Calu3 (cell line): ENCODE measurements at regions of chr4 and their contacts with region 1.

Region 1: GRCh38 chr4:109702950-109703663 is at the start of gene CASP6:
- DNase-seq: peak; percentile 75
- H3K4me3 Mint-ChIP-seq: peak within 1 kb of the TSS; percentile 92
- H3K27ac Mint-ChIP-seq: peak within 1 kb of the TSS; percentile 40
- H3K4me1 Mint-ChIP-seq: peaks cover 16% of the 10 kb centered on the region
- H3K27me3 Mint-ChIP-seq: no peaks in the 10 kb centered on the region
- CTCF ChIP-seq: peak; percentile 54
- total RNA-seq, gene CASP6: 16.1 and 22.3 TPM in 2 replicates

Region 2: GRCh38 chr4:109125084-109125483 is 578.0 kb before region 1 on chr4:
- CTCF ChIA-PET with region 1: no interaction called
- intact Hi-C with region 1: no loop called
- DNase-seq: no peak
- H3K4me3 Mint-ChIP-seq: no peak overlapping the region
- H3K27ac Mint-ChIP-seq: no peak overlapping the region
- H3K4me1 Mint-ChIP-seq: no peaks in the 10 kb centered on the region
- H3K27me3 Mint-ChIP-seq: no peaks in the 10 kb centered on the region
- CTCF ChIP-seq: no peak

Region 3: DNA sequence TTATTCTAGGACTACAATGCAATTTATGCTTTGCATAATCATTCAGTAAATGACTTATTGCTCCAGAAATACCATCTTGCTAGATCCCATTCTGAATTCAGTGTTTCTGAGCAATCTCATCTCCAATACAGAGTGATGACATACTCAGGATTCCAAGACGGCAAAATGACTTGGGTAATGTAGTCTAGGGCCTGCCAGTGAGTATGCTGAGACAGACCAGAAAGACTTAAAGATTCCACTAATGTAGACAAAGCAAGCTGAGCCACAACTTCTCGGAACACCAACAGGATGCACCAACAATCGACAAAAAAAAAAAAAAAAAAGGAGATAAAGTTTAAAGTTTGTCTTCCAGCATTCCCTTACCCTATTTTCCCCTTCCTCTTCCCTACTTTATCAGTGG is 270.4 kb before region 1 on chr4:
- CTCF ChIA-PET with region 1: no interaction called
- intact Hi-C with region 1: loop called (anchors 5 kb)
- DNase-seq: no peak
- H3K4me3 Mint-ChIP-seq: peak overlapping the region; percentile 59
- H3K27ac Mint-ChIP-seq: no peak overlapping the region
- H3K4me1 Mint-ChIP-seq: no peaks in the 10 kb centered on the region
- H3K27me3 Mint-ChIP-seq: no peaks in the 10 kb centered on the region
- CTCF ChIP-seq: no peak

Region 4: DNA sequence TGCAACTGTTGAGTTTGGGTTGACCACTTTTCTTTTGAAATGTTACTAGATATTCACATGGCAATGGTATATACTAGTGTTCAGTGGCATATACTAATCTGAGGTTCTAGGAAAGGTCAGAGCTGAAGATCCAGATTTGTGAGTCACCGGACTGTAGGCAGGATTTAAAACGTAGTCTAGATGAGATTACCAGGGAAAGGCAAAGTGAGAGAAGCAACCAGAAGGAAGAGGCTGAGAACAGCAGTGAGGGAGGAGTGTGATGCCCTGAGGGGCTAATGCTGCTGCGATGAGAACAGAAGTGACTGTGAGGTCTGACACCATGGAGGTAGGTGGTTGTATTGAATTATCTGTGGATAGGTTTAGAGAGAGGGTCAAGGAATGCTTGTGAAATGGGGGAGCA is 36.5 kb after region 1 on chr4:
- CTCF ChIA-PET with region 1: no interaction called
- intact Hi-C with region 1: no loop called
- DNase-seq: no peak
- H3K4me3 Mint-ChIP-seq: no peak overlapping the region
- H3K27ac Mint-ChIP-seq: no peak overlapping the region
- H3K4me1 Mint-ChIP-seq: no peaks in the 10 kb centered on the region
- H3K27me3 Mint-ChIP-seq: no peaks in the 10 kb centered on the region
- CTCF ChIP-seq: no peak

Region 5: GRCh38 chr4:109815151-109816081 is 112.3 kb after region 1 on chr4 and contains the start of gene GAR1:
- CTCF ChIA-PET with region 1: no interaction called
- intact Hi-C with region 1: loop called (anchors 5 kb)
- DNase-seq: peak; percentile 79
- H3K4me3 Mint-ChIP-seq: peak within 1 kb of the TSS; percentile 78
- H3K27ac Mint-ChIP-seq: peak within 1 kb of the TSS; percentile 75
- H3K4me1 Mint-ChIP-seq: peaks cover 24% of the 10 kb centered on the region
- H3K27me3 Mint-ChIP-seq: no peaks in the 10 kb centered on the region
- CTCF ChIP-seq: no peak
- total RNA-seq, gene GAR1: 20.8 and 23.7 TPM in 2 replicates

Region 6: GRCh38 chr4:109977854-109978501 is 274.9 kb after region 1 on chr4:
- CTCF ChIA-PET with region 1: no interaction called
- intact Hi-C with region 1: loop called (anchors 10 kb)
- DNase-seq: peak; percentile 9
- H3K4me3 Mint-ChIP-seq: no peak overlapping the region
- H3K27ac Mint-ChIP-seq: no peak overlapping the region
- H3K4me1 Mint-ChIP-seq: peaks cover 7% of the 10 kb centered on the region
- H3K27me3 Mint-ChIP-seq: no peaks in the 10 kb centered on the region
- CTCF ChIP-seq: no peak